ENCODE measurements at regions of chr4 and their contacts with region 1.

Region 1: DNA sequence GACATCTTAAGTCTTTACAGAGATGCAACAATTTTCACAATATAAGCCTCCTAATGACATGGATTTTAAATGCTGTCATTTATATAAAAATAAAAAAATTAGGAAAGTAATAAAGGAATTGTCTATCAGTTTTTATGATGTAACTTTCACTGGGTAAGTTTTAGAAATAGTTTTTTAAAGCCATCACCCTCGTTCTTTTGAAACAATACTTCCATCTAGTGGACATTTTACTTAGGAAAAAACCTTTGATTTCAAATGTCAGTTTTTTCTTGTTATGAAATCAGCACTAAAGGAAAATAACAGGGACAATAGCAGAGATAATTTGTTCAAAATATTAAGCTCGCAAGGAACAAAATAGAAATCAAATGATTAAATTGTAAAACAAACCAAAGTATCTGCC is 24.3 kb upstream of the NDNF start:
- DNase-seq: no peak
- H3K4me3 ChIP-seq: no peak overlapping the region
- H3K27ac ChIP-seq: no peak overlapping the region
- H3K4me1 ChIP-seq: no peaks in the 10 kb centered on the region
- H3K27me3 ChIP-seq: no peaks in the 10 kb centered on the region
- CTCF ChIP-seq: peak; percentile 46

Region 2: GRCh38 chr4:120071192-120071795 is 1025.3 kb before region 1 on chr4:
- intact Hi-C with region 1: loop called (anchors 10 kb)
- DNase-seq: peak; percentile 56
- H3K4me3 ChIP-seq: no peak overlapping the region
- H3K27ac ChIP-seq: no peak overlapping the region
- H3K4me1 ChIP-seq: peaks cover 5% of the 10 kb centered on the region
- H3K27me3 ChIP-seq: no peaks in the 10 kb centered on the region
- CTCF ChIP-seq: peak; percentile 60

Region 3: DNA sequence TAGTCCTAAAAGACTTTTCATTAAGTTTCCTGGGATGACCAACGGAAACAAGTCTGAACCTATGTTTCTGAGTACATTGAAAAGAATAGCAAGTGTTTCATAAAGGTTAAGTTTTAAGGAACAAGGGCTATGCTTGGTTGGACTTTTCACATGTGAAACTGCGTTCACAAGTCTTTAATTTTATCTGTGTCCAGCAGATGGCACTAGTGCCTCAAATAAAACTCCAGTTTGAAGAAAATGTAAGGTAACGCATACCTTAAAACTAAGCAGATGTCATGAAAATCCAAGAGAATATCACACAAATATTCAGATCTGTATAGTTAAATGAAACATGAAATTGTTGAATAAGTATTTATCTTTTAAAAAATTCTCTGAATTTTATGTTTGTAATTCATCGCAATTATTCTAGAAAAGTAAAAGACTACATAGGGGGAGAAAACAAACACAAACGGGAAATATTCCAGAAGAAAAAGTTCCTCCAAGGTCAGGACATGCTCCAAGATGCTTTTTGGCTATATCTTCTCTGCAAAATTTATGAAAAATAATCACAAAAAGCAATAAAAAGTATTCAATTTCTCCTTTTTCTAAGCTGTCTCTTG is 940.4 kb before region 1 on chr4:
- intact Hi-C with region 1: loop called (anchors 2 kb)
- DNase-seq: peak; percentile 32
- H3K4me3 ChIP-seq: no peak overlapping the region
- H3K27ac ChIP-seq: no peak overlapping the region
- H3K4me1 ChIP-seq: no peaks in the 10 kb centered on the region
- H3K27me3 ChIP-seq: no peaks in the 10 kb centered on the region
- CTCF ChIP-seq: peak; percentile 60

Region 4: DNA sequence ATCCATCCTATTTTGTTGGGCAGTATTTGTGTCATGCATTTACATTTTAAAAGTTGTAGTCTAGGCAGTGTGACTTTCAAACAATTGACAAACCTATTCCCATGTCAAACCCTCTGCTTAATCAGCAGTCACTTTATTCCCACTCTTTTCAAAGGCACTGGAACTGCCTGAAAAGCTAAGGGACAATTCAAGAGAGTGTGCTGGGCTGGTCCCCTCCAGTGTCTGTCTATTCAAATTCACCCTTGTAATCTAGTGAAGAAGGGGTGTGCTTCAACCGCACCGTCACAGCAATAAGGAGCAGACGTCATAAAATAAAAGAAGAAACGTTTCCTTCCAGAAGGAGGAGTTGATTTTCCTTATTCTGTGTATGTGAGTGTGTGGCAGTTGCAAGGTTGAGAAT is 833.0 kb before region 1 on chr4:
- intact Hi-C with region 1: no loop called
- DNase-seq: no peak
- H3K4me3 ChIP-seq: no peak overlapping the region
- H3K27ac ChIP-seq: no peak overlapping the region
- H3K4me1 ChIP-seq: no peaks in the 10 kb centered on the region
- H3K27me3 ChIP-seq: no peaks in the 10 kb centered on the region
- CTCF ChIP-seq: no peak

Region 5: GRCh38 chr4:120718979-120719566 is 377.6 kb before region 1 on chr4:
- intact Hi-C with region 1: loop called (anchors 5 kb)
- DNase-seq: peak; percentile 25
- H3K4me3 ChIP-seq: no peak overlapping the region
- H3K27ac ChIP-seq: no peak overlapping the region
- H3K4me1 ChIP-seq: no peaks in the 10 kb centered on the region
- H3K27me3 ChIP-seq: no peaks in the 10 kb centered on the region
- CTCF ChIP-seq: peak; percentile 48

Region 6: DNA sequence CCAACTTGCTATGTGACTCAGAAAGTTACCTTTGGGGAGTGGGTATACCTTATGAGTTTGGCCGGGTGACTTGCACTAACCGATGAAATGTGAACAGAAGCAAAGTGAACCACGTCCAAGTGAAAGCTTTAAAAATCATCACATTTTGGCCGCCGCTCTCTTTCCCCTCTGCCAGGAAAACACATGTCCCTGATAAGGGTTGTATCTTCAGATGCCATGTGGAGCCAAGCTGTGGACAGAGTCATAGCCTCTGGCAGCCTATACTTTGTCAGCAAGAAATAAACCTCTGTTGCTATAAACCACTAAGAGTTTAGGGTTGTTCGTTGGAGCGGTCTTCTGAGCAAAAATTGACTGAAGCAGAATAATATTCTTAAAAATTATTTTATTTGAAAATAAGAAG is 266.4 kb before region 1 on chr4:
- intact Hi-C with region 1: loop called (anchors 10 kb)
- DNase-seq: no peak
- H3K4me3 ChIP-seq: no peak overlapping the region
- H3K27ac ChIP-seq: no peak overlapping the region
- H3K4me1 ChIP-seq: no peaks in the 10 kb centered on the region
- H3K27me3 ChIP-seq: no peaks in the 10 kb centered on the region
- CTCF ChIP-seq: no peak

Region 7: GRCh38 chr4:121272526-121272925 is 175.9 kb after region 1 on chr4:
- intact Hi-C with region 1: no loop called
- DNase-seq: no peak
- H3K4me3 ChIP-seq: no peak overlapping the region
- H3K27ac ChIP-seq: no peak overlapping the region
- H3K4me1 ChIP-seq: no peaks in the 10 kb centered on the region
- H3K27me3 ChIP-seq: no peaks in the 10 kb centered on the region
- CTCF ChIP-seq: no peak

Region 8: DNA sequence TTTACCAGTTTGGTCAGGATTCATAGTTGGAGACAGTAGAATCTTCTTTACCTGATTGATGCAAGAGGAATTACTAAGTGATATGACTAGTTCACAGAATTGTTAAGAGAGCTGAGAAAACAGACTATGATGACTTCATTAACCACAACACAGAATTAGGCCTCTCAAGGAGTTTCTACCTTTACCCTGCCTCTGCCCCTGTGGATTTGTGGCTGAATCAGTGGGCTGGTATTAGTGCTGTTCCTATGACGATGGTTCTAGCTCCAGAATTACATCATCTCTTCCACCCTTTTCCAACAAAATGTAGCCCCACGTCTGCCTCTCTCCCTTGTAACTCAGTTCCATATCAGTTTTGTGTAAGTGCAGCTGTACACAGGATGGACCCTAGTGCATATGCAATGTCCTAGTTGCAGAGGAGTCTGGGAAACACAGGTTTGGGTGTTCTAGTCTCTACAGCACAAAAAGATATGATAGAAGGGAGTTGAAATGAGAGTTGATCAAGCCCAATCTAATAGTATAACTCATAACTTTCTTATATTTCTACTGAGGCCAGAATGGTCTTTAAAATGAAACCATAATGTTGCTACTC is 500.8 kb after region 1 on chr4:
- intact Hi-C with region 1: no loop called
- DNase-seq: no peak
- H3K4me3 ChIP-seq: no peak overlapping the region
- H3K27ac ChIP-seq: no peak overlapping the region
- H3K4me1 ChIP-seq: no peaks in the 10 kb centered on the region
- H3K27me3 ChIP-seq: no peaks in the 10 kb centered on the region
- CTCF ChIP-seq: no peak